Breast epithelium (tissue), 4 donors: ENCODE measurements at regions of chr11 and their contacts with region 1.

Region 1: GRCh38 chr11:27234043-27234668 is 128.9 kb downstream of the CCDC34 start:
- DNase-seq: no peak
- H3K4me3 ChIP-seq: no peak overlapping the region
- H3K27ac ChIP-seq: no peak overlapping the region
- H3K4me1 ChIP-seq: no peaks in the 10 kb centered on the region
- H3K27me3 ChIP-seq: no peaks in the 10 kb centered on the region
- CTCF ChIP-seq: no peak
- POLR2A ChIP-seq: no peak

Region 2: GRCh38 chr11:26493616-26494015 is 740.5 kb before region 1 on chr11:
- intact Hi-C with region 1: loop called (anchors 5 kb)
- DNase-seq: no peak
- H3K4me3 ChIP-seq: no peak overlapping the region
- H3K27ac ChIP-seq: no peak overlapping the region
- H3K4me1 ChIP-seq: no peaks in the 10 kb centered on the region
- H3K27me3 ChIP-seq: no peaks in the 10 kb centered on the region
- CTCF ChIP-seq: no peak
- POLR2A ChIP-seq: no peak

Region 3: GRCh38 chr11:27313157-27313821 is 79.1 kb after region 1 on chr11:
- intact Hi-C with region 1: no loop called
- DNase-seq: no peak
- H3K4me3 ChIP-seq: no peak overlapping the region
- H3K27ac ChIP-seq: no peak overlapping the region
- H3K4me1 ChIP-seq: no peaks in the 10 kb centered on the region
- H3K27me3 ChIP-seq: no peaks in the 10 kb centered on the region
- CTCF ChIP-seq: no peak
- POLR2A ChIP-seq: no peak